Dendritic cell treated with granulocyte-macrophage colony-stimulating factor and Interleukin-4, amounts not matched to agents 40 ng/mL and 50 ng/mL, for 4 days (primary cell): ENCODE measurements at regions of chr11 and their contacts with region 1.

Region 1: GRCh38 chr11:87290304-87290922 is 252.7 kb downstream of the TMEM135 start:
- H3K4me3 Mint-ChIP-seq: no peak overlapping the region
- H3K27ac Mint-ChIP-seq: no peak overlapping the region
- H3K4me1 Mint-ChIP-seq: no peaks in the 10 kb centered on the region
- H3K27me3 Mint-ChIP-seq: no peaks in the 10 kb centered on the region

Region 2: GRCh38 chr11:86869966-86870570 is 420.3 kb before region 1 on chr11:
- intact Hi-C with region 1: loop called (anchors 2 kb)
- H3K4me3 Mint-ChIP-seq: no peak overlapping the region
- H3K27ac Mint-ChIP-seq: no peak overlapping the region
- H3K4me1 Mint-ChIP-seq: peaks cover 8% of the 10 kb centered on the region
- H3K27me3 Mint-ChIP-seq: peaks cover 2% of the 10 kb centered on the region

Region 3: GRCh38 chr11:86938900-86939880 is 351.2 kb before region 1 on chr11:
- intact Hi-C with region 1: loop called (anchors 1 kb)
- H3K4me3 Mint-ChIP-seq: no peak overlapping the region
- H3K27ac Mint-ChIP-seq: no peak overlapping the region
- H3K4me1 Mint-ChIP-seq: peaks cover 5% of the 10 kb centered on the region
- H3K27me3 Mint-ChIP-seq: peaks cover 3% of the 10 kb centered on the region

Region 4: GRCh38 chr11:86978756-86979608 is 311.4 kb before region 1 on chr11:
- intact Hi-C with region 1: loop called (anchors 1 kb)
- H3K4me3 Mint-ChIP-seq: no peak overlapping the region
- H3K27ac Mint-ChIP-seq: no peak overlapping the region
- H3K4me1 Mint-ChIP-seq: no peaks in the 10 kb centered on the region
- H3K27me3 Mint-ChIP-seq: no peaks in the 10 kb centered on the region

Region 5: DNA sequence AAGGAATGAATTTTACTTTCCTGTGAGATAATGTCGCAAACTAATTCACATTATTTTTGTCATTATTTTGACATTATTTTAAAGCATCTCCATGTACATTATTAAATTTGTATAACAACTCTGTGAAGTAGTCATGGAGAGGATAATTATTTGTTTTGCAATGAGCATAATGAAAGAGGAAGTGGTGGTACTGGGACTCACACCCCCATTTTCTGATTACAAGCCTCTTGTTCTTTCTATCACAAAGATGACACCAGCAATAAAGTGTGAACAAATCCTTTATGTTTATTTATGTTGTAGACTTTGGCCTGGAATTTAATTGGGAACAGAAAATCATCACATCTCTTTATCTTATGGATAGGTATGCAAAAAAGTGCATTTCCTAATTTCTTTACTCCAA is 269.9 kb after region 1 on chr11:
- intact Hi-C with region 1: no loop called
- H3K4me3 Mint-ChIP-seq: no peak overlapping the region
- H3K27ac Mint-ChIP-seq: no peak overlapping the region
- H3K4me1 Mint-ChIP-seq: no peaks in the 10 kb centered on the region
- H3K27me3 Mint-ChIP-seq: no peaks in the 10 kb centered on the region

Region 6: DNA sequence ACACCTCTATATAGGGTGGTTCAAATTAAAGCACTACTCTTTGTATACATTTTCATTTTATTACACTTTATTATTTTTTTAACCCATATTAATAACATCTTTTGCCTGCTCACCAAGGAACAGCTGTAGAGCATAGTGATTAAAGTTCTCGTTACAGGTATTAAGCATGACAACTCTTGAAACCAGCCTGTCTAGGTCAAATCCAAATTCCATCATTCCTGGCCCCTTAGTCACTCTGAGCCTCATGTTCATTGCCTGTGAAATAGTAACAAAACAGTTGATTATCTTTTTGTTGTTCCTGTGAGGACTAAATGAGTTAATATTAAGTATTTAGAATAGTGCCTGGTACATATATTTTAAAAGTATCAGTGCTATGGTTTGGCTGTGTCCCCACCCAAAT is 550.4 kb after region 1 on chr11:
- intact Hi-C with region 1: no loop called
- H3K4me3 Mint-ChIP-seq: no peak overlapping the region
- H3K27ac Mint-ChIP-seq: no peak overlapping the region
- H3K4me1 Mint-ChIP-seq: no peaks in the 10 kb centered on the region
- H3K27me3 Mint-ChIP-seq: no peaks in the 10 kb centered on the region

Region 7: GRCh38 chr11:87926250-87926970 is 636.0 kb after region 1 on chr11:
- intact Hi-C with region 1: no loop called
- H3K4me3 Mint-ChIP-seq: no peak overlapping the region
- H3K27ac Mint-ChIP-seq: no peak overlapping the region
- H3K4me1 Mint-ChIP-seq: no peaks in the 10 kb centered on the region
- H3K27me3 Mint-ChIP-seq: no peaks in the 10 kb centered on the region

Region 8: GRCh38 chr11:87974797-87975196 is 684.4 kb after region 1 on chr11:
- intact Hi-C with region 1: no loop called
- H3K4me3 Mint-ChIP-seq: no peak overlapping the region
- H3K27ac Mint-ChIP-seq: no peak overlapping the region
- H3K4me1 Mint-ChIP-seq: no peaks in the 10 kb centered on the region
- H3K27me3 Mint-ChIP-seq: no peaks in the 10 kb centered on the region